Kidney (tissue), 22 donors: ENCODE measurements at regions of chr7 and their contacts with region 1.

Region 1: GRCh38 chr7:88449410-88449809 is 142.7 kb upstream of the STEAP4 start:
- DNase-seq: no peak
- H3K4me3 ChIP-seq: no peak overlapping the region
- H3K27ac ChIP-seq: no peak overlapping the region
- H3K4me1 ChIP-seq: no peaks in the 10 kb centered on the region
- H3K27me3 ChIP-seq: no peaks in the 10 kb centered on the region
- CTCF ChIP-seq: no peak

Region 2: GRCh38 chr7:88396295-88396947 is 53.0 kb before region 1 on chr7:
- intact Hi-C with region 1: loop called (anchors 5 kb)
- DNase-seq: no peak
- H3K4me3 ChIP-seq: no peak overlapping the region
- H3K27ac ChIP-seq: no peak overlapping the region
- H3K4me1 ChIP-seq: no peaks in the 10 kb centered on the region
- H3K27me3 ChIP-seq: no peaks in the 10 kb centered on the region
- CTCF ChIP-seq: no peak